ENCODE measurements at regions of chr5 and their contacts with region 1.

Region 1: GRCh38 chr5:81838307-81838906 is 87.5 kb upstream of the SSBP2 start:
- DNase-seq: no peak
- ATAC-seq: peak in 6 of 8 donors; percentile 62 to 81 (median 68)
- H3K4me3 ChIP-seq: no peak overlapping the region
- H3K27ac ChIP-seq: no peak overlapping the region
- H3K4me1 ChIP-seq: peaks cover 0 to 22% (median 4%) of the 10 kb centered on the region in 9 donors
- H3K27me3 ChIP-seq: no peaks in the 10 kb centered on the region
- CTCF ChIP-seq: peak in 7 of 9 donors; percentile 21 to 60 (median 50)

Region 2: GRCh38 chr5:81469676-81470075 is 368.7 kb before region 1 on chr5:
- intact Hi-C with region 1: no loop called
- DNase-seq: no peak
- ATAC-seq: no peak
- H3K4me3 ChIP-seq: no peak overlapping the region
- H3K27ac ChIP-seq: no peak overlapping the region
- H3K4me1 ChIP-seq: peaks cover 0 to 4% (median 0%) of the 10 kb centered on the region in 9 donors
- H3K27me3 ChIP-seq: no peaks in the 10 kb centered on the region
- CTCF ChIP-seq: no peak

Region 3: DNA sequence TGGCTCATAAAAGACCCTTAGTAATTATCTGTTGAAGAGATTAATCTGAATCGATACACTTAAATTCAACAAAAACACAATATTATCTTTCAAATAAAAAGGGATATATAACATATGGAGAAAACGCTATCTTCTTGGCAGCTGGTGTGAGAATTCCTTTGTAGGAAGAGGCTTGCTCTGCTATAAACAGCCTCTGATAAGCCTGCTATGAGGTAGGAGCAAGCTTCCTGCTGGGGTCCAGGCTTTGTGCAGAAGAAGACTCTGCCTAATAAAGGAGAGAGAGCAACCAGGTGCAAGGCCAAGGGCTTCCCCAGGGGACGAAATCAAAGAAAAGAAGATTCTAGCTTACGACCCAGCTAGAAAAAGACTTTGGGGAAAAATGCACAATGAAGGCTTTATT is 44.2 kb before region 1 on chr5:
- intact Hi-C with region 1: loop called in 2 of 10 experiments (anchors 5 kb)
- DNase-seq: no peak
- ATAC-seq: peak in 3 of 8 donors; percentile 42 to 89 (median 73)
- H3K4me3 ChIP-seq: no peak overlapping the region
- H3K27ac ChIP-seq: peak overlapping the region in 1 of 10 donors; percentile 8
- H3K4me1 ChIP-seq: peaks cover 3 to 18% (median 11%) of the 10 kb centered on the region in 9 donors
- H3K27me3 ChIP-seq: no peaks in the 10 kb centered on the region
- CTCF ChIP-seq: no peak

Region 4: DNA sequence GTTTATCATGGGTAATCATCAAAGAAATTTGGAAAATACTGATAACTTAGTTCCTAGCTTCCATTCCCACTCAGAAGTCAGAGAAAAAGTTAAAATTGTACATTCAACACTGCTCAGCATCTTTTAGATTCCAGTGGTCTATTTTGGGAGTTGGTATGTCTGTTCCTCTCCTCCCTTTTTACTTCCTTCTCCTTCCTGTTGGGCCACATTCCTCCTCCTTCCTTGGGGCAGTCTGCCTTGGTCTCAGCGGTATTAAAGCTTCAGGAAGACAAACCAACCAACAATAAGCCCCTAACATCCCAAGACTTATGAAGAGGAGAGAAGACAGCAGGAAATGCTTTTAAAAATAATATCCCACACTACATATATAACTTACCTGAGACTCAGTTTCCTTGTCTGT is 37.6 kb before region 1 on chr5:
- intact Hi-C with region 1: loop called in 2 of 10 experiments (anchors 5 kb)
- DNase-seq: no peak
- ATAC-seq: no peak
- H3K4me3 ChIP-seq: no peak overlapping the region
- H3K27ac ChIP-seq: no peak overlapping the region
- H3K4me1 ChIP-seq: peaks cover 0 to 6% (median 0%) of the 10 kb centered on the region in 9 donors
- H3K27me3 ChIP-seq: no peaks in the 10 kb centered on the region
- CTCF ChIP-seq: no peak

Measured in heart right ventricle (tissue), 16 donors.